ENCODE measurements at regions of chr19 and their contacts with region 1.

Region 1: GRCh38 chr19:21940684-21941083 is 70.1 kb downstream of the ZNF208 start:
- DNase-seq: no peak

Region 2: GRCh38 chr19:22935151-22935550 is 994.5 kb after region 1 on chr19:
- in situ Hi-C with region 1: loop called (anchors 5 kb)
- DNase-seq: no peak